ENCODE measurements at regions of chr7 and their contacts with region 1.

Region 1: GRCh38 chr7:142587578-142588191 is 161.6 kb upstream of the PRSS1 start:
- DNase-seq: peak in 7 of 9 donors; percentile 18 to 53 (median 34)
- ATAC-seq: peak; percentile 91
- H3K4me3 ChIP-seq: no peak overlapping the region
- H3K4me3 Mint-ChIP-seq: peak overlapping the region in 4 of 10 donors; percentile 5 to 56 (median 24)
- H3K27ac ChIP-seq: no peak overlapping the region
- H3K27ac Mint-ChIP-seq: peak overlapping the region in 4 of 9 donors; percentile 12 to 66 (median 42)
- H3K4me1 ChIP-seq: no peaks in the 10 kb centered on the region
- H3K4me1 Mint-ChIP-seq: peaks cover 0 to 16% (median 5%) of the 10 kb centered on the region in 7 donors
- H3K27me3 ChIP-seq: no peaks in the 10 kb centered on the region
- H3K27me3 Mint-ChIP-seq: no peaks in the 10 kb centered on the region

Region 2: DNA sequence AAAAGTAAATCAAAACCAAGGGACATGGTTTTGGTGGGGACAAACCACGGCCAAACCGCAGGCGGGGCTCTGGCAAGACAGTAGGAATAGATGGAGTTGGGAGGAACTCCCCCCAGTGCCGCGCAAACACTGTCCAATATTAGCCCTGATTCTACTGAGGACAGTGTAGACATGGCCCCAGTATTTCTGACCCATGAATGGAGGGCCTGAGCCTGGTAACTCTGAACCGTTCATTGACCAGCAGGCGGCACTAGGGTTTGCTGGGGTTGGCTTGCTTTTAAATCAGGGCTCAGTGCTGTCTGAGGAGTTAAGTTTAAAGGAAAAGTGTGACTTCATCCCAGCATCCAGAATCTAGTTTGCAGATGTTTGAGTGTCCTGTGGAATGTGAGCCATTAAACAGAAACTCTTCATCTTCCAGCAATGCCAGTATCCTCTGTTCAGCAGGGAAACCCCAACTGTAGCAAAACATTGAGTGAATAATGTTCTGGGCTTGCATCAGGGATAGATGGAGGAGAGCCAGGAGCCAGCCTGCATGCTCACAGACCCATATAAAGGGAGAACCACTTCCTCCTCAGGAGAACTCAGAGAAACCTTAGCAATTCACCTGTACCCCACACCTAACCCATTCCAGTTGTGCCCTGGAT is 182.4 kb before region 1 on chr7:
- CTCF ChIA-PET with region 1: no interaction called
- POLR2A ChIA-PET with region 1: no interaction called
- intact Hi-C with region 1: no loop called
- DNase-seq: no peak
- ATAC-seq: no peak
- H3K4me3 ChIP-seq: no peak overlapping the region
- H3K4me3 Mint-ChIP-seq: no peak overlapping the region
- H3K27ac ChIP-seq: no peak overlapping the region
- H3K27ac Mint-ChIP-seq: no peak overlapping the region
- H3K4me1 ChIP-seq: no peaks in the 10 kb centered on the region
- H3K4me1 Mint-ChIP-seq: peaks cover 0 to 8% (median 0%) of the 10 kb centered on the region in 7 donors
- H3K27me3 ChIP-seq: peaks cover 0 to 3% of the 10 kb centered on the region in 2 donors
- H3K27me3 Mint-ChIP-seq: peaks cover 0 to 35% (median 7%) of the 10 kb centered on the region in 5 donors

Region 3: GRCh38 chr7:142438235-142438922 is 149.3 kb before region 1 on chr7:
- CTCF ChIA-PET with region 1: no interaction called
- POLR2A ChIA-PET with region 1: no interaction called
- intact Hi-C with region 1: loop called in 1 of 2 experiments (anchors 5 kb)
- DNase-seq: peak in 4 of 9 donors; percentile 25 to 37 (median 31)
- ATAC-seq: peak; percentile 71
- H3K4me3 ChIP-seq: no peak overlapping the region
- H3K4me3 Mint-ChIP-seq: peak overlapping the region in 2 of 10 donors; percentile 0 to 4
- H3K27ac ChIP-seq: no peak overlapping the region
- H3K27ac Mint-ChIP-seq: peak overlapping the region in 2 of 9 donors; percentile 8 to 11
- H3K4me1 ChIP-seq: peaks cover 6 to 26% of the 10 kb centered on the region in 2 donors
- H3K4me1 Mint-ChIP-seq: peaks cover 39 to 70% (median 66%) of the 10 kb centered on the region in 7 donors
- H3K27me3 ChIP-seq: no peaks in the 10 kb centered on the region
- H3K27me3 Mint-ChIP-seq: no peaks in the 10 kb centered on the region

Region 4: GRCh38 chr7:142496545-142497041 is 91.1 kb before region 1 on chr7:
- CTCF ChIA-PET with region 1: interaction called, 7 read pairs
- POLR2A ChIA-PET with region 1: no interaction called
- intact Hi-C with region 1: loop called in 1 of 2 experiments (anchors 2 kb)
- DNase-seq: peak in 7 of 9 donors; percentile 39 to 58 (median 45)
- ATAC-seq: peak; percentile 71
- H3K4me3 ChIP-seq: peak overlapping the region; percentile 30
- H3K4me3 Mint-ChIP-seq: peak overlapping the region; percentile 41 to 85 (median 70)
- H3K27ac ChIP-seq: peak overlapping the region; percentile 64
- H3K27ac Mint-ChIP-seq: peak overlapping the region; percentile 33 to 93 (median 77)
- H3K4me1 ChIP-seq: peaks cover 5 to 46% of the 10 kb centered on the region in 2 donors
- H3K4me1 Mint-ChIP-seq: peaks cover 15 to 72% (median 65%) of the 10 kb centered on the region in 7 donors
- H3K27me3 ChIP-seq: no peaks in the 10 kb centered on the region
- H3K27me3 Mint-ChIP-seq: peaks cover 0 to 9% (median 0%) of the 10 kb centered on the region in 5 donors

Region 5: GRCh38 chr7:142516038-142516501 is 71.6 kb before region 1 on chr7:
- CTCF ChIA-PET with region 1: interaction called, 3 read pairs
- POLR2A ChIA-PET with region 1: no interaction called
- intact Hi-C with region 1: loop called in 1 of 2 experiments (anchors 2 kb)
- DNase-seq: peak in 5 of 9 donors; percentile 42 to 55 (median 47)
- ATAC-seq: peak; percentile 85
- H3K4me3 ChIP-seq: no peak overlapping the region
- H3K4me3 Mint-ChIP-seq: peak overlapping the region in 7 of 10 donors; percentile 4 to 81 (median 46)
- H3K27ac ChIP-seq: no peak overlapping the region
- H3K27ac Mint-ChIP-seq: peak overlapping the region in 8 of 9 donors; percentile 32 to 92 (median 74)
- H3K4me1 ChIP-seq: peaks cover 0 to 35% of the 10 kb centered on the region in 2 donors
- H3K4me1 Mint-ChIP-seq: peaks cover 19 to 67% (median 56%) of the 10 kb centered on the region in 7 donors
- H3K27me3 ChIP-seq: no peaks in the 10 kb centered on the region
- H3K27me3 Mint-ChIP-seq: peaks cover 0 to 10% (median 0%) of the 10 kb centered on the region in 5 donors

Region 6: DNA sequence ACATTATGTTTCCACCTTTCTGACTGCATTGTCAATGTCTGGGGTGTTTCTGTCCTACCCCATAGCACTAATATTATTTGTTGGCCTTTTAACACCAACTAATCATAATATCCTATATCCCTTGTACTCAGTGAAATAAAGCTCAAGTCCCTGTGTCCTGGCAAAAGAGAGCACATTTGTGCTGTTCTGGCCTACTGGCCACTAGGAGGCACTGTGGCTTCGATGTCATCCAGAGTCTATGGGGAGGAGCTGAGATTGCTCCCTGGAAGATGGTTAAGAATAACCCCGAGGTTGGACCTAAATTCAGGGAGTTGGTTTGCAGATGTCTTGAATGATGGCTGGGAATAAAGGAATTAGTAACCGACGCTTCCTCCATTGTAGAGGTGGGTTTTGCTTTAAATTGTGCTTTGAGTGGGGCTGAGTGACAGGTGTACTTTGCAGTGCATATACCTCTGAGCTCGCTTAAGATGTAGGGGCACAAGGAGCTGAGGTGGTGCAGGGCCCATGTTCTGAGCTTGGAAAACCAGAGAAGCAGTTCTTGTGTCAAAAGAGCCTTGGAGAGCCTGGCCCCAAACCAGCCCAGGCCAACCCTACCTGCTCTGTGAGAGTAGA is 29.6 kb before region 1 on chr7:
- CTCF ChIA-PET with region 1: interaction called, 9 read pairs
- POLR2A ChIA-PET with region 1: no interaction called
- intact Hi-C with region 1: loop called in 1 of 2 experiments (anchors 1 kb)
- DNase-seq: peak; percentile 24 to 56 (median 42)
- ATAC-seq: peak; percentile 87
- H3K4me3 ChIP-seq: no peak overlapping the region
- H3K4me3 Mint-ChIP-seq: peak overlapping the region; percentile 18 to 73 (median 59)
- H3K27ac ChIP-seq: no peak overlapping the region
- H3K27ac Mint-ChIP-seq: peak overlapping the region in 4 of 9 donors; percentile 6 to 73 (median 48)
- H3K4me1 ChIP-seq: no peaks in the 10 kb centered on the region
- H3K4me1 Mint-ChIP-seq: peaks cover 0 to 26% (median 5%) of the 10 kb centered on the region in 7 donors
- H3K27me3 ChIP-seq: no peaks in the 10 kb centered on the region
- H3K27me3 Mint-ChIP-seq: peaks cover 0 to 24% (median 4%) of the 10 kb centered on the region in 5 donors

Region 7: DNA sequence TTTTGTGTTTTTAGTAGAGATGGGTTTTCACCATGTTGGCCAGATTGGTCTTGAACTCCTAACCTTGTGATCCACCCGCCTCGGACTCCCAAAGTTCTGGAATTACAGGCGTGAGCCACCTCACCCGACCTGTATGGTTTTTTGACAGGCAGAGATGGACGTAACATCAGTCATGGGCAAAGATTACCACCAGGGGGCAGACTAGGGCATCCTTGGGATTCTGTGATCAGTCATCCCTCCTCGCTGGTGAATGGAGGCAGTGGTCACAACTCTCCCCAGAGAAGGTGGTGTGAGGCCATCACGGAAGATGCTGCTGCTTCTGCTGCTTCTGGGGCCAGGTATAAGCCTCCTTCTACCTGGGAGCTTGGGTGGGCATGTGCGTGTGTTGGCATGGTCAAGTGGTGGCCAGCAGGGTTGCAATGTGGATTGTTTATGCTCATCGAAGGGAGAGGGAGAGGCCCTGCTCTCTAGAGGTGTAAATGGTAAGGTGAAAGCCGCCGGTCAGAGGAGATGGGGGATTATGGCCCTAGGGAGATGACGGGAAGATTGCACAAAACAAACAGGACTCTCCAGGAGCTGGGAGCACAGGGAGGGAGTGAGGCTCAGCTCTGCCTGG is 38.8 kb after region 1 on chr7:
- CTCF ChIA-PET with region 1: no interaction called
- POLR2A ChIA-PET with region 1: no interaction called
- intact Hi-C with region 1: no loop called
- DNase-seq: peak; percentile 42 to 68 (median 61)
- ATAC-seq: peak; percentile 88
- H3K4me3 ChIP-seq: no peak overlapping the region
- H3K4me3 Mint-ChIP-seq: peak overlapping the region; percentile 61 to 89 (median 83)
- H3K27ac ChIP-seq: peak overlapping the region; percentile 58
- H3K27ac Mint-ChIP-seq: peak overlapping the region; percentile 61 to 96 (median 83)
- H3K4me1 ChIP-seq: no peaks in the 10 kb centered on the region
- H3K4me1 Mint-ChIP-seq: peaks cover 0 to 7% (median 3%) of the 10 kb centered on the region in 7 donors
- H3K27me3 ChIP-seq: no peaks in the 10 kb centered on the region
- H3K27me3 Mint-ChIP-seq: peaks cover 0 to 19% (median 0%) of the 10 kb centered on the region in 5 donors

Region 8: GRCh38 chr7:142974626-142975025 is 386.9 kb after region 1 on chr7:
- CTCF ChIA-PET with region 1: no interaction called
- POLR2A ChIA-PET with region 1: no interaction called
- intact Hi-C with region 1: no loop called
- DNase-seq: no peak
- ATAC-seq: no peak
- H3K4me3 ChIP-seq: no peak overlapping the region
- H3K4me3 Mint-ChIP-seq: no peak overlapping the region
- H3K27ac ChIP-seq: no peak overlapping the region
- H3K27ac Mint-ChIP-seq: no peak overlapping the region
- H3K4me1 ChIP-seq: no peaks in the 10 kb centered on the region
- H3K4me1 Mint-ChIP-seq: no peaks in the 10 kb centered on the region
- H3K27me3 ChIP-seq: peaks cover 0 to 2% of the 10 kb centered on the region in 2 donors
- H3K27me3 Mint-ChIP-seq: peaks cover 7 to 24% (median 18%) of the 10 kb centered on the region in 5 donors